Calu3 (cell line): ENCODE measurements at regions of chr6 and their contacts with region 1.

Region 1: DNA sequence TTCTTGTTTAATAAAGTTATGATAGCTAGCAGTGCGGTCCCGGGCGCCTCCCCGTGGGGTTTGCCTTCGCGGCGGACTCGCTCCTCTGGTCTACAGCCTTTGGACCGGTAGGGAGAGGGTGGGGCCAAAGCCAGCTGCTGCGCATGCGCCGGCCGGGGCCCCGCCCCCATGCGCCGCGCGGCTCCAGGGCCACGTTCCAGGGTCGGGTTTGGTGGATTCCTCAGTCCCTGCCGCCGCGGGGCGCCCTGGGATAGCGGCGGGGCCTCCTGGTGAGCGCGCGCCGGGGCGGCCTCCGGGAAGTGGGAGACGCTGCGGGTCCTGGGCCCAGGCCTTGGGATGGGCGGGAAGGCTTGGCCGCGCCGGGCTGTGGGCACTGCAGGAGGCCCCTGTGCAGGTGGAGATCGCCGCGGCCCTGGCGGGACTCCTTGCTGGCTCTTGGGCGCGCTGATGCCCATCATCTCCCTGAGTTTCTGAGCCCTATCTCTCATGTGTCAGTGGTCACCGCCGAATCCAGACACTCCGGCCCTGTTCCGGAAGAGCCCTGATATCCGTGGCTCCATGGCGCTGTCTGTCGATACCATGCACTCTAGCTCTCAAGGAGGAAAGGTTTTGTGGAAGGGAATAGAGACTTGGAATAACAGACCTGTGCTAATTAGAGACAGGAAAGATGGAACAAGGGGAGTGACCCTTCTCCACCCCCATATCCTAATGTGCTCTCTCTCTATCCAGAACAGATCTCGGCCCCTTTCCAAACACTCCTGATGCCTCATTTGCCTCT is at the start of gene VARS2:
- DNase-seq: peak; percentile 100
- H3K4me3 Mint-ChIP-seq: peak within 1 kb of the TSS; percentile 78
- H3K27ac Mint-ChIP-seq: peak within 1 kb of the TSS; percentile 71
- H3K4me1 Mint-ChIP-seq: peaks cover 21% of the 10 kb centered on the region
- H3K27me3 Mint-ChIP-seq: no peaks in the 10 kb centered on the region
- CTCF ChIP-seq: peak; percentile 41
- total RNA-seq, gene VARS2: 33.0 and 34.2 TPM in 2 replicates

Region 2: GRCh38 chr6:30844091-30844535 is 70.2 kb before region 1 on chr6:
- CTCF ChIA-PET with region 1: interaction called, 14 read pairs
- intact Hi-C with region 1: no loop called
- DNase-seq: no peak
- H3K4me3 Mint-ChIP-seq: no peak overlapping the region
- H3K27ac Mint-ChIP-seq: no peak overlapping the region
- H3K4me1 Mint-ChIP-seq: peaks cover 48% of the 10 kb centered on the region
- H3K27me3 Mint-ChIP-seq: no peaks in the 10 kb centered on the region
- CTCF ChIP-seq: peak; percentile 7

Region 3: GRCh38 chr6:30926644-30927043 is 12.4 kb after region 1 on chr6:
- CTCF ChIA-PET with region 1: interaction called, 27 read pairs
- intact Hi-C with region 1: no loop called
- DNase-seq: peak; percentile 74
- H3K4me3 Mint-ChIP-seq: peak overlapping the region; percentile 23
- H3K27ac Mint-ChIP-seq: peak overlapping the region; percentile 81
- H3K4me1 Mint-ChIP-seq: peaks cover 39% of the 10 kb centered on the region
- H3K27me3 Mint-ChIP-seq: no peaks in the 10 kb centered on the region
- CTCF ChIP-seq: no peak

Region 4: DNA sequence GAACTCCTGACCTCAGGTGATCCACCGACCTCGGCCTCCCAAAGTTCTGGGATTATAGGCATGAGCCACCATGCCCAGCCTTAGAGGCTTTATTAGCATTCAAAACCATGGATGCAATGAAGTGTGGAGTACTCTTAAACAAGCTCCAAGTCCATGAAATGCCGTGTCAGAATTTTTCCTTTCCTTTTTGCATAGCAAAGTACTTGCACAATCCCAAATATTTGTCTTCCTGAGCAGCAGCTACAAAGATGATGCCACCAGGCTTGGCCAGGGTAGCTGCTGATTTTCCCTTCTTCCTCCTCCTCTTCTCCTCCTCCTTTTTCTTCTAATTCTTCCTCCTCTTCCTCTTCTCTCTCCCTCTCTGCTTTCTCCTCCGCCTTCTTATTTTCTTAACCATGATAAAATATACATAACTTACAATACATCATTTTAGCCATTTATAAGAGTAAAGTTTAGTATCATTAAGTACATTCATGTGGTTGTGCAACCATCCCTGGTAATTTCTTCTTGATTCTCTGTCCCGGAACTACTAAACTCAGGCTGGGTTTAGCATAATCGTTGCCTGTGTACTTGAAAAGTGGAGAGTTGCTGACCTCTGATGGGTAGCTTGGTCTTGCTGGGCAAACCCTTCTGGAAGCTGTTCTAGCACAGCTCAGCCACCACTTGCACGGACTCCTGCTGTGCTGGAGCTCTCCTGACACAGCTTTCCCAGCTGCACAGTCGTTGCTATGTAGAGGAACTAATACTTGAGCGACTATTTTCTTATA is 46.8 kb after region 1 on chr6:
- CTCF ChIA-PET with region 1: interaction called, 3 read pairs
- intact Hi-C with region 1: loop called (anchors 5 kb)
- DNase-seq: no peak
- H3K4me3 Mint-ChIP-seq: no peak overlapping the region
- H3K27ac Mint-ChIP-seq: no peak overlapping the region
- H3K4me1 Mint-ChIP-seq: peaks cover 28% of the 10 kb centered on the region
- H3K27me3 Mint-ChIP-seq: peaks cover 46% of the 10 kb centered on the region
- CTCF ChIP-seq: no peak

Region 5: GRCh38 chr6:31079656-31080261 is 165.5 kb after region 1 on chr6:
- CTCF ChIA-PET with region 1: interaction called, 81 read pairs
- intact Hi-C with region 1: loop called (anchors 2 kb)
- DNase-seq: peak; percentile 89
- H3K4me3 Mint-ChIP-seq: no peak overlapping the region
- H3K27ac Mint-ChIP-seq: no peak overlapping the region
- H3K4me1 Mint-ChIP-seq: peaks cover 8% of the 10 kb centered on the region
- H3K27me3 Mint-ChIP-seq: no peaks in the 10 kb centered on the region
- CTCF ChIP-seq: peak; percentile 89

Region 6: GRCh38 chr6:32046450-32047083 is 1132.3 kb after region 1 on chr6:
- CTCF ChIA-PET with region 1: no interaction called
- intact Hi-C with region 1: no loop called
- DNase-seq: no peak
- H3K4me3 Mint-ChIP-seq: no peak overlapping the region
- H3K27ac Mint-ChIP-seq: no peak overlapping the region
- H3K4me1 Mint-ChIP-seq: peaks cover 16% of the 10 kb centered on the region
- H3K27me3 Mint-ChIP-seq: peaks cover 18% of the 10 kb centered on the region
- CTCF ChIP-seq: no peak